PC-3 (cell line): ENCODE measurements at regions of chr6 and their contacts with region 1.

Region 1: DNA sequence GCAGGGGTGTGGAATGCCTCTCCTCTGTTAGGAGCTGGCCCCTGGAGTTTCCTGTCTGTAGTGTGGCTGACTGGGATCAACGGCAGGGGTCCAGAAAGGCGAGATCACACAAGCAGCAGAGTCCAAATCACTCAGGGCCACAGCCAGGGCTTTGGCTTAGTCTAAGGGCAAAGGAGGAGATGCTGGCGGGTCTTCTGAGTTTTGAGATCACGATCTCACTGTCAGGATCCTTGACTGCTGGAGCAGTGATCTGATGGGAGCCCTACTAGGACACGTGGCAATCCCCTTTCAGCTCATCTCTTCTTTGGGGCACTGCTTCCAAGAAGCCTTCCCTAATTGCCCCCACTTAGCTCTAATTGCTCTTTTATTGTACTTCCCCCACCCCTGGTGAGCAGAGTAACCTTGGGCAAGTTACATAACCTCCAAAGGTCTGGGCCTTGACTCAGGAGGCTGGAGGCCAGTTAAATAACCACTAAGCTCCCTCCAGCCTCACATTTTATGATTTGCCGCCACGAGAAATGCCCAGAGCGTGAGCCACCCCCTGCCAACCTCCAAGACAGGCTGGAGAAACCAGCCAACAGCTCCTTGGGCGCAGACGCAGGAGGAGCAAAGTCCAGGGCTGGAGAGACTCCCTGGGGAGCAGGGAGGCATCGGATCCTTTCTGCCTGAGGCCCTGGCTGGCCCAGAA is 12.0 kb downstream of the KCNK5 start:
- DNase-seq: no peak
- ATAC-seq: no peak
- H3K4me3 ChIP-seq: no peak overlapping the region
- H3K27ac ChIP-seq: no peak overlapping the region
- H3K4me1 ChIP-seq: peaks cover 20% of the 10 kb centered on the region
- H3K27me3 ChIP-seq: no peaks in the 10 kb centered on the region
- CTCF ChIP-seq: no peak

Region 2: GRCh38 chr6:39200479-39201020 is 16.8 kb before region 1 on chr6:
- CTCF ChIA-PET with region 1: interaction called, 10 read pairs
- POLR2A ChIA-PET with region 1: no interaction called
- intact Hi-C with region 1: no loop called
- DNase-seq: peak; percentile 50
- ATAC-seq: no peak
- H3K4me3 ChIP-seq: no peak overlapping the region
- H3K27ac ChIP-seq: no peak overlapping the region
- H3K4me1 ChIP-seq: peaks cover 37% of the 10 kb centered on the region
- H3K27me3 ChIP-seq: no peaks in the 10 kb centered on the region
- CTCF ChIP-seq: no peak